ENCODE measurements at regions of chr3 and their contacts with region 1.

Region 1: DNA sequence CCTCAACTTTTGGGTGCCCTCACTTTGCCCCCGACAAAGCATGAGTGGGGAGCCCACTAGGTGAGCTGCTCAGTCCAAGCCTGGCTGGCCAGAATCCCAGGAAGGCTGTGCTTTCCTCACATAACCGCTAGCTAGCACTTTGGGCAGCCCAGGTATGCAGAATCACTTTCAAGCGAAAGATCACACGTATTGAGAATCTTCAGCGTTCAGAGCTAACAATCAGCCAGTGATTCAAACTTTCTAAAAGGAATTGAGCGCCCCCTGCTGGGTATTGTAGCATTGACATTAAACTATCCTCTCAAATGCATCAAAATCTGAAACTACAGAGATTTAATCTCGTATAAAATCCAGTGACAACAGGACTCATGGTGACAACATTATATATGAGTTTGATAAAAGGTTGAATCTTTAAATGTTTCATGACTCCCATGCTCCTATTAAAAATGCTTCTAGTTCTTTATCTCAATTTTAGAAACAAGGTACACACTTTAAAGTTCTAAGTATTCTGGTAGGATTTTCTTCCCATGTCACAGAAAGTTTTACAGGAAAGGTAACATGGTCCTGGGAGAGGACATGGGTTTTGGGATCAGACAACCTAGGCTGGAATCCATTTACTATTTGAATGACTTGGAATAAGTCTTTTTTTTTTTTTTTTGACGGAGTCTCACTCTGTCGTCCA is 11.8 kb downstream of the ANAPC13 start:
- DNase-seq: peak; percentile 17 to 67 (median 23)
- ATAC-seq: peak; percentile 79
- H3K4me3 ChIP-seq: no peak overlapping the region
- H3K27ac ChIP-seq: no peak overlapping the region
- H3K4me1 ChIP-seq: no peaks in the 10 kb centered on the region
- H3K27me3 ChIP-seq: no peaks in the 10 kb centered on the region
- CTCF ChIP-seq: peak; percentile 42 to 68 (median 59); a peak in 5 of 6 replicates
- EP300 ChIP-seq: no peak
- POLR2A ChIP-seq: no peak
- RAD21 ChIP-seq: peak; percentile 44 to 64

Region 2: GRCh38 chr3:134201201-134202130 is 272.5 kb before region 1 on chr3:
- CTCF ChIA-PET with region 1: interaction called, 3 read pairs
- POLR2A ChIA-PET with region 1: no interaction called
- in situ Hi-C with region 1: loop called (anchors 10 kb)
- intact Hi-C with region 1: no loop called
- DNase-seq: no peak
- ATAC-seq: no peak
- H3K4me3 ChIP-seq: no peak overlapping the region
- H3K27ac ChIP-seq: no peak overlapping the region
- H3K4me1 ChIP-seq: no peaks in the 10 kb centered on the region
- H3K27me3 ChIP-seq: no peaks in the 10 kb centered on the region
- CTCF ChIP-seq: no peak
- EP300 ChIP-seq: no peak
- POLR2A ChIP-seq: no peak
- RAD21 ChIP-seq: no peak

Region 3: GRCh38 chr3:134212906-134213665 is 260.9 kb before region 1 on chr3:
- CTCF ChIA-PET with region 1: interaction called, 5 read pairs
- POLR2A ChIA-PET with region 1: no interaction called
- in situ Hi-C with region 1: loop called (anchors 10 kb)
- intact Hi-C with region 1: loop called (anchors 5 kb)
- DNase-seq: peak; percentile 62 to 77 (median 64)
- ATAC-seq: peak; percentile 96
- H3K4me3 ChIP-seq: no peak overlapping the region
- H3K27ac ChIP-seq: no peak overlapping the region
- H3K4me1 ChIP-seq: no peaks in the 10 kb centered on the region; a peak in 1 of 5 replicates
- H3K27me3 ChIP-seq: no peaks in the 10 kb centered on the region
- CTCF ChIP-seq: peak; percentile 79 to 81 (median 80)
- EP300 ChIP-seq: no peak
- POLR2A ChIP-seq: no peak
- RAD21 ChIP-seq: peak; percentile 51 to 72

Region 4: GRCh38 chr3:134308350-134308891 is 165.6 kb before region 1 on chr3:
- CTCF ChIA-PET with region 1: interaction called, 23 read pairs
- POLR2A ChIA-PET with region 1: interaction called, 6 read pairs
- in situ Hi-C with region 1: loop called (anchors 5 kb)
- intact Hi-C with region 1: loop called (anchors 1 kb)
- DNase-seq: peak; percentile 62 to 71 (median 68)
- ATAC-seq: peak; percentile 91
- H3K4me3 ChIP-seq: no peak overlapping the region
- H3K27ac ChIP-seq: no peak overlapping the region
- H3K4me1 ChIP-seq: peaks cover 0 to 11% of the 10 kb centered on the region in 2 experiments; a peak in 2 of 5 replicates
- H3K27me3 ChIP-seq: peaks cover 2 to 35% of the 10 kb centered on the region in 2 experiments; a peak in 3 of 5 replicates
- CTCF ChIP-seq: peak; percentile 84 to 94 (median 92)
- EP300 ChIP-seq: no peak
- POLR2A ChIP-seq: no peak
- RAD21 ChIP-seq: peak; percentile 79 to 90

Region 5: GRCh38 chr3:134392336-134392983 is 81.5 kb before region 1 on chr3:
- CTCF ChIA-PET with region 1: no interaction called
- POLR2A ChIA-PET with region 1: no interaction called
- in situ Hi-C with region 1: no loop called
- intact Hi-C with region 1: loop called (anchors 10 kb)
- DNase-seq: no peak
- ATAC-seq: no peak
- H3K4me3 ChIP-seq: no peak overlapping the region
- H3K27ac ChIP-seq: no peak overlapping the region
- H3K4me1 ChIP-seq: no peaks in the 10 kb centered on the region
- H3K27me3 ChIP-seq: peaks cover 0 to 47% of the 10 kb centered on the region in 2 experiments; a peak in 3 of 5 replicates
- CTCF ChIP-seq: no peak
- EP300 ChIP-seq: no peak
- POLR2A ChIP-seq: no peak
- RAD21 ChIP-seq: no peak

Measured in K562 (cell line).